ENCODE measurements at regions of chr2 and their contacts with region 1.

Region 1: DNA sequence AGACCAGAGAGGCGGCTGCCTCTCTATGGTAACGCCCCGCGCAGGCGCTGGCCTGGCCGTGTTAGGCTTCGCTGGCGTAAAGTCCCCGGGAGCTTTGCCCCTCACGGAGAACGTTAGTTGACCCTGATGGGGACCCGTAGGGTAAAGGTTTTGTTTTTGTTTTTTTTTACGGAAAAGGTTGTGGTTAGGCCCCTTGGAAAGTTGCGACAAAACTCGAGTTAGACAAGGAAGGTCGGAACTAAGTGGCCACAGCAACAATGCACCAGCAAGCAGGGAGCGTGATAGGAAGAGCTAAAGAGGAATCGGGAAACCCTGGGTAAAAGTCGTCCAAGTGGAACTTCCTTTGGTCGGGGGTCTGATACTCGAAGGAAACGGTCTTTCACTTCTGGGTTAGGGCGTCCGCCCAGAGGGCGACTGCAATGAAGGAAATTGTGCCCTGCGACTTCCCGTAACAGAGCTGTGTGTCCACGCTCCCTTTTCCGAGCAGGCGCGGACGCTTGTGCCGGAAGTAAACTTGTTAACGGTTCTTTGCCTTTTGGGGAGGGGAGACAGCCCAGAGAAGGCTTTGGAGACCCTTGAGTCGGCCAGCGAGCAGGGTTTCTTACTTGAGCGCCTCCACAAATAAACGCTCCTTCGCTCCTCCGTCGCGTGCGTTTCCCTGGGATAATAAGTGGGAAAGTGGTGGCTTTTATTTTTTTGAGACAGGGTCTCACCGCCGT is 493 bp upstream of the CLASP1 start:
- DNase-seq: peak; percentile 97
- H3K4me3 Mint-ChIP-seq: peak overlapping the region; percentile 88
- H3K27ac Mint-ChIP-seq: peak overlapping the region; percentile 100
- H3K4me1 Mint-ChIP-seq: peaks cover 68% of the 10 kb centered on the region
- H3K27me3 Mint-ChIP-seq: no peaks in the 10 kb centered on the region

Region 2: DNA sequence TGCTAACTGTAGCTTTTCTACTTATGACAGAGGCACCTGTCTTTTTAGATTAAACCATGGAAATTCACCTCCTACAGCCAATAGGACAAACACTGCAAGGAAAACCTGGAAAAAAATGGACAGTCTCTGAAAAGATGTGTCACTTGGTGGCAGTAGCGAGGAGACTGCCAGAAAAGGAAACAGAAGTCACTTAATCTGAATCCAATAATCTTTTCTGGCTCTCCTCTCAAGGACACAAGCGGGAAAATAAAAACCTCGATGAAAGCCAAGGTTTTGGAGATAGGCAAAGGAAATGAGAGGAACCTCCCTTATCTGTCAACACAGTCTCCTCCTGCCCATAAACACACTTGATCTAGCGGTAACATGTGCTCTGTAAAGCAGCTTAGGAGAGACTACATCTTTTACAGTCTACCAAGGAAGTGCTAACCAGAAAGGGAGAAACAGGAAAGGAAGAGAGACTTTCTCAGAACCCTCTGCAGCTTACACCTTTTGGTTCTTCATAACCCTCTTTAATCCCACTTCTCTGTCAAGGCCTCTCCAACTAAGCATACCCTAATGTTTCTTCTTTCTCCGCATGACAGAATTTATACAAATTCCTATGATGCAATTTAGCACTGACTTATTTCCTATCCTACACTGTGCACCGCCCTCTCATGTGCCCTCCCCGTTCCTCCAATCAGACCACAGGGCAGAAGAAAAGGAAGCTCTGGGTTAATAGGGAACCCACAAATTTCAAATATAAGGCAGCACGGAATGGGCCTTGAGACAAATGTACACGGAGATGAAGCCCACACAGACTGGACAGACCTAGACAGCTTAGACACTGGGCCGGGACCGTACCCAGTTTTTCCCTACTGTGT is 53.3 kb before region 1 on chr2:
- CTCF ChIA-PET with region 1: interaction called, 3 read pairs
- POLR2A ChIA-PET with region 1: interaction called, 19 read pairs
- DNase-seq: peak; percentile 22
- H3K4me3 Mint-ChIP-seq: peak overlapping the region; percentile 30
- H3K27ac Mint-ChIP-seq: peak overlapping the region; percentile 82
- H3K4me1 Mint-ChIP-seq: peaks cover 44% of the 10 kb centered on the region
- H3K27me3 Mint-ChIP-seq: no peaks in the 10 kb centered on the region

Region 3: GRCh38 chr2:121608367-121608766 is 41.4 kb before region 1 on chr2:
- CTCF ChIA-PET with region 1: no interaction called
- POLR2A ChIA-PET with region 1: no interaction called
- DNase-seq: no peak
- H3K4me3 Mint-ChIP-seq: no peak overlapping the region
- H3K27ac Mint-ChIP-seq: no peak overlapping the region
- H3K4me1 Mint-ChIP-seq: peaks cover 13% of the 10 kb centered on the region
- H3K27me3 Mint-ChIP-seq: no peaks in the 10 kb centered on the region

Region 4: GRCh38 chr2:121682396-121683298 is 32.9 kb after region 1 on chr2:
- CTCF ChIA-PET with region 1: no interaction called
- POLR2A ChIA-PET with region 1: interaction called, 10 read pairs
- DNase-seq: no peak
- H3K4me3 Mint-ChIP-seq: no peak overlapping the region
- H3K27ac Mint-ChIP-seq: no peak overlapping the region
- H3K4me1 Mint-ChIP-seq: peaks cover 9% of the 10 kb centered on the region
- H3K27me3 Mint-ChIP-seq: peaks cover 6% of the 10 kb centered on the region

Region 5: DNA sequence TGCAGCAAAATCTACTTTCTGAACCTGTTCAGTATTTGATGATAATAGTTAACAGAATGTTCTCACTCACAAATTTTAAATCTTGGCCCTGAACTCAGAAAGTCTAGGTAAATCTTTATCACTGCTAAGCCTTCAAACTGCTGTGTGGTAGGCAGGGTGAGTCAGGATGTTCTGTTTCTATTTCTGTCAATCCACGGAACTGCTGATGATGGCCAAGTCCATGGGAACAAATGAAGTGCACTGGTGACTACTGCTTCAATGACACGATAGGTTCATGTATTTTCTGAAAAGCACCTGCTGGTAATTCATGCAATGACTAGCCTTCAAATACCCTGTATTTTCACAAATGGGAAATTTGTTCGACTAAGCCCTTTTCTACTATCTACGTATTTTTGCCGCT is 72.7 kb after region 1 on chr2:
- CTCF ChIA-PET with region 1: interaction called, 9 read pairs
- POLR2A ChIA-PET with region 1: interaction called, 24 read pairs
- DNase-seq: peak; percentile 52
- H3K4me3 Mint-ChIP-seq: peak overlapping the region; percentile 25
- H3K27ac Mint-ChIP-seq: peak overlapping the region; percentile 92
- H3K4me1 Mint-ChIP-seq: peaks cover 38% of the 10 kb centered on the region
- H3K27me3 Mint-ChIP-seq: no peaks in the 10 kb centered on the region

Region 6: DNA sequence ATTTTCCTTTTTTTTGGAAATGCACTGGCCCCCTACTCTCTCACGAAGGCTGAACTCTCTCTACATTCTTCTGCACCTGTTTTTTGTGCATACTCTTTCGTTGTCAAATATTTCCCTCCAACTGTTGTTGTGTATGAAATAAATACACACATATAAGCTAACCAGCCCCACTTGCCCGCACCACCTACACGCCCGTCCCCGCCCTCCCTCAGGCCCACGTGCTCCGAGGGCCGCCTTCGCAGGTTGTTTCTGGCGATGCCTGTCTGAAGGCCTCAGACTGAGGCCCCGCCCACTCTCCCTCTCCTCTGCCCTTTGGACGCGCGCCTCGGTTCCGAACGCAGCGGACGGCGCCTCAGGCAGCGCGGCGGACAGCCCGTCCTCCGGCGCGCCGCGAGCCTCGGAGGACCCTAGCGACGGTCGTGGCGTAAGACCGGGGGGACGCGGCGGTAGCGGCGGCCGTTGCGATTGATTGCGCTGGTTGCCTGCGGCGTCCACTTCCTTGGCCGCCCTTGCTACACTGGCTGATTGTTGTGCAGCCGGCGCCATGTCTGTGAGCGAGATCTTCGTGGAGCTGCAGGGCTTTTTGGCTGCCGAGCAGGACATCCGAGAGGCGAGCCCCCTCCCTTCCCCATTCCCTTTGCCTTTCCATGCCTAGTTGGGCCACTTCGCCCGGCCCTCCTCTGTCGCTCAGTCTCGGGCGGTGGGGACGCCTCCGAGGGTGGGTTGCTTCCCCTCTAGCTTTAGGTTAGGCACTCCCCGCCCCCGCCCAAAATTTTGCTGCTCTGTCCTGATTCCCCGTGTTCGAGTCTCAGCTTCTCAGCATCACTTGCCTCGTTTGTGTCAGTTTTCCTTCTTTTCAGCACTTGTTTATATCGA is 105.7 kb after region 1 on chr2 and contains the start of gene TSN:
- CTCF ChIA-PET with region 1: no interaction called
- POLR2A ChIA-PET with region 1: interaction called, 10 read pairs
- DNase-seq: peak; percentile 98
- H3K4me3 Mint-ChIP-seq: peak within 1 kb of the TSS; percentile 86
- H3K27ac Mint-ChIP-seq: peak within 1 kb of the TSS; percentile 88
- H3K4me1 Mint-ChIP-seq: peaks cover 26% of the 10 kb centered on the region
- H3K27me3 Mint-ChIP-seq: no peaks in the 10 kb centered on the region
- total RNA-seq, gene TSN: 52.7 to 56.7 TPM

Region 7: DNA sequence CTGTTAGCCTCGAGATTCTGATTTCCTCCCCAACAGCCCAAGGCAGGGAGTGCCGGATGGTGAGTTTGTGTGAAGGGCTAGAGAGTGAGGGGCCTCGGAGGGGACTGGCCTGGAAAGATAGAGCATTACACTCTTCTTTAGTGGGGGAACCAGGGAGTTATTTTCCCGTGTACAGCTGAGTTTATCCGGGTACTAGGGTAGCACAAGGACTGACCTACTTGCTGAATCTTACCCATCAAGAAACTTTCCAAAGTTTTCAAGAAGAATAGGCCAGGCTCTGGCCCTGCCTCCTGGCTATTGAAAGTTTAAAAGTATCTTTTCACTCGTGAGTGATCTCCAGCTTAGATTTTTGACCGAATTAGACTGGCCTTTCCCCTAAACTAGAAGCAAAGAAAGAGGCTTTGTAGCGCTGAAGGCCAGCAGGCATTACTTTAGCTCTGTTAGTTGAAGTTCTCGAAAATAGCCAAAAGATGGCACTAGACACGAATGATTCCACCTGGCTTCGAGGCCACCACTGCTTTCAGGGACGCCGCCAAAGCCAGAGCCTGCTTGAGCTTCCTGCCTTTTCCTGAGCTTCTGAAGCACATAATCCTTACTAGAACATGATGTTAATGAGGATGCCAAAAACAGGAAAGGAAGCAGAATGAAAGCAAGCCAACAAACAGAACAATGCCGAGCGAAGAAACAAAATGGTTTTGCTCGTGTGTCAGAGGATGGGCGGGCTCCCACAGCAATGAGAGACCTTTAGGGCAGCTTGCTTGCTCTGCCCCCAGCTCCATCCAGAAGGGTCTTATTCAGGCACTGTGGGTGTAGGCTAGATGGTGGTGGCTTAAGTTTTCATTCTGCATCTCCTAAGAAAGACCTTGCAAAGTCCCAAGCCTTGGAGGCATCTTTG is 161.5 kb after region 1 on chr2:
- CTCF ChIA-PET with region 1: no interaction called
- POLR2A ChIA-PET with region 1: no interaction called
- DNase-seq: no peak
- H3K4me3 Mint-ChIP-seq: no peak overlapping the region
- H3K27ac Mint-ChIP-seq: no peak overlapping the region
- H3K4me1 Mint-ChIP-seq: no peaks in the 10 kb centered on the region
- H3K27me3 Mint-ChIP-seq: peaks cover 11% of the 10 kb centered on the region

Region 8: GRCh38 chr2:121855510-121855909 is 205.8 kb after region 1 on chr2:
- CTCF ChIA-PET with region 1: no interaction called
- POLR2A ChIA-PET with region 1: no interaction called
- DNase-seq: no peak
- H3K4me3 Mint-ChIP-seq: no peak overlapping the region
- H3K27ac Mint-ChIP-seq: no peak overlapping the region
- H3K4me1 Mint-ChIP-seq: no peaks in the 10 kb centered on the region
- H3K27me3 Mint-ChIP-seq: peaks cover 20% of the 10 kb centered on the region

Region 9: DNA sequence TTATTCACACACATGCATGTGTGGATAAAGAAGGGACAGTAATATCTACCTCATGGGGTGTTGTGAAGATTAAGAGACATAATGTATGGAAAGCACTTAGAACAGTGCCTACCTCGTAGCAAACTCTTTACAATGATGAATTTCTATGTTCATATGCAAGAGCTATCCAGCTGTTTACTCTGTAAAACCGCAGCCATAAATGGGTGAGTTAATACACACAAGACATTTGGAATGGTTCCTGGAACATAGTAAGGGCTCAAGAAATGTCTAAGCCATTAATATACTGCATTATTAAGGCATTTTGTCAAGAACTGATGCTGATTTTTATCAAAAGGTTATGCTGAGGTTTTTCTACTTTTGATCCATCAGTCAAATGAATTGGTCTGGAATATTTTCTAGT is 1181.9 kb after region 1 on chr2:
- CTCF ChIA-PET with region 1: no interaction called
- POLR2A ChIA-PET with region 1: no interaction called
- DNase-seq: no peak
- H3K4me3 Mint-ChIP-seq: no peak overlapping the region
- H3K27ac Mint-ChIP-seq: no peak overlapping the region
- H3K4me1 Mint-ChIP-seq: no peaks in the 10 kb centered on the region
- H3K27me3 Mint-ChIP-seq: no peaks in the 10 kb centered on the region